ENCODE measurements at regions of chr7 and their contacts with region 1.

Region 1: GRCh38 chr7:31122649-31123058 is 70.5 kb downstream of the ADCYAP1R1 start:
- DNase-seq: peak; percentile 61 to 69
- H3K4me3 ChIP-seq: no peak overlapping the region
- H3K27ac ChIP-seq: no peak overlapping the region
- H3K4me1 ChIP-seq: no peaks in the 10 kb centered on the region
- H3K27me3 ChIP-seq: peaks cover 65% of the 10 kb centered on the region
- CTCF ChIP-seq: peak; percentile 86

Region 2: GRCh38 chr7:30800785-30801252 is 321.8 kb before region 1 on chr7:
- CTCF ChIA-PET with region 1: interaction called, 4 read pairs
- POLR2A ChIA-PET with region 1: no interaction called
- intact Hi-C with region 1: loop called (anchors 1 kb)
- DNase-seq: peak; percentile 52 to 61
- H3K4me3 ChIP-seq: no peak overlapping the region
- H3K27ac ChIP-seq: no peak overlapping the region
- H3K4me1 ChIP-seq: peaks cover 56% of the 10 kb centered on the region
- H3K27me3 ChIP-seq: no peaks in the 10 kb centered on the region
- CTCF ChIP-seq: peak; percentile 91

Region 3: GRCh38 chr7:31109751-31110150 is 12.9 kb before region 1 on chr7:
- CTCF ChIA-PET with region 1: interaction called, 13 read pairs
- POLR2A ChIA-PET with region 1: no interaction called
- intact Hi-C with region 1: no loop called
- DNase-seq: no peak
- H3K4me3 ChIP-seq: no peak overlapping the region
- H3K27ac ChIP-seq: no peak overlapping the region
- H3K4me1 ChIP-seq: no peaks in the 10 kb centered on the region
- H3K27me3 ChIP-seq: peaks cover 68% of the 10 kb centered on the region
- CTCF ChIP-seq: no peak

Region 4: GRCh38 chr7:31160941-31161340 is 38.3 kb after region 1 on chr7:
- CTCF ChIA-PET with region 1: no interaction called
- POLR2A ChIA-PET with region 1: no interaction called
- intact Hi-C with region 1: no loop called
- DNase-seq: no peak
- H3K4me3 ChIP-seq: no peak overlapping the region
- H3K27ac ChIP-seq: no peak overlapping the region
- H3K4me1 ChIP-seq: no peaks in the 10 kb centered on the region
- H3K27me3 ChIP-seq: 0 out of 2 replicates have a peak, but pooled peaks cover 8% of the 10 kb centered on the region
- CTCF ChIP-seq: no peak

Region 5: GRCh38 chr7:31234836-31235605 is 112.4 kb after region 1 on chr7:
- CTCF ChIA-PET with region 1: no interaction called
- POLR2A ChIA-PET with region 1: no interaction called
- intact Hi-C with region 1: no loop called
- DNase-seq: no peak
- H3K4me3 ChIP-seq: no peak overlapping the region
- H3K27ac ChIP-seq: no peak overlapping the region
- H3K4me1 ChIP-seq: no peaks in the 10 kb centered on the region
- H3K27me3 ChIP-seq: peaks cover 74% of the 10 kb centered on the region
- CTCF ChIP-seq: no peak

Region 6: GRCh38 chr7:31398815-31399214 is 276.2 kb after region 1 on chr7:
- CTCF ChIA-PET with region 1: interaction called, 10 read pairs
- POLR2A ChIA-PET with region 1: no interaction called
- intact Hi-C with region 1: no loop called
- DNase-seq: no peak
- H3K4me3 ChIP-seq: no peak overlapping the region
- H3K27ac ChIP-seq: no peak overlapping the region
- H3K4me1 ChIP-seq: no peaks in the 10 kb centered on the region
- H3K27me3 ChIP-seq: peaks cover 19% of the 10 kb centered on the region; the same call in 1 of the 2 replicates
- CTCF ChIP-seq: no peak